Endothelial cell of umbilical vein (primary cell): ENCODE measurements at regions of chr9 and their contacts with region 1.

Region 1: GRCh38 chr9:92438900-92439526 is 14.7 kb upstream of the OMD start:
- DNase-seq: peak; percentile 38
- H3K4me3 ChIP-seq: no peak overlapping the region
- H3K27ac ChIP-seq: no peak overlapping the region
- H3K4me1 ChIP-seq: no peaks in the 10 kb centered on the region
- H3K27me3 ChIP-seq: no peaks in the 10 kb centered on the region
- CTCF ChIP-seq: no peak
- POLR2A ChIP-seq: no peak

Region 2: DNA sequence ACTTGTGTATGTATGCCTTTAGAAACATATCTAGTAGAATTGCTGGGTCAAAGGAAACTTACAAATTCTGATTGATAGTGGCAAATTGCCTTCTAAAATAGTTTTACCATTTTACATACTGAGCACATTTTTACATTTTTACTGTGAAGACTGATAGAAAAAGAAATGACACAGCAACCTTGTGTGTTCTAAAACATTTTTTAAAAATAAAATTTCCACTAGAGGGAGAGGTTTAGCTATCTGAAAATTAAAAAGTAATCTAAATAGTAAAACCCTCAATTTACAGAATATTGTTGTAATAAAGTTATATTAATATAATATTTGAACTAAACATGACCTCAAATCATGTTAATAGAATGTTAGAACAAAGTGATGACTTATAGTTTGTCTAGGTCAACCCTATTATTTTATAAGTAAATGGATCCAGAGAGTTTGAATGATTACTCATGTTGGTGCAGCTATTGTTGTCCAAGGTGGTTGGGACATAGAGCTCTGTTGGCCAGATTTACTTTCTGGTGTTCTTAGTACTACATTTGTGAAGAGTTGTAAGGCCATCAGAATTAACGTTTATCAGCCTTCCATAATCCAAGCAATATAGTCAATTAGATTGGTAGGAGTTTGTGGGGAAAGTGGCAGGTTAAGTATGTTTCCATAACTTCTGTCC is 96.1 kb before region 1 on chr9:
- CTCF ChIA-PET with region 1: interaction called, 11 read pairs
- POLR2A ChIA-PET with region 1: no interaction called
- dilution Hi-C with region 1: no loop called
- intact Hi-C with region 1: no loop called
- DNase-seq: peak; percentile 6
- H3K4me3 ChIP-seq: no peak overlapping the region
- H3K27ac ChIP-seq: no peak overlapping the region
- H3K4me1 ChIP-seq: no peaks in the 10 kb centered on the region
- H3K27me3 ChIP-seq: no peaks in the 10 kb centered on the region
- CTCF ChIP-seq: no peak
- POLR2A ChIP-seq: no peak

Region 3: DNA sequence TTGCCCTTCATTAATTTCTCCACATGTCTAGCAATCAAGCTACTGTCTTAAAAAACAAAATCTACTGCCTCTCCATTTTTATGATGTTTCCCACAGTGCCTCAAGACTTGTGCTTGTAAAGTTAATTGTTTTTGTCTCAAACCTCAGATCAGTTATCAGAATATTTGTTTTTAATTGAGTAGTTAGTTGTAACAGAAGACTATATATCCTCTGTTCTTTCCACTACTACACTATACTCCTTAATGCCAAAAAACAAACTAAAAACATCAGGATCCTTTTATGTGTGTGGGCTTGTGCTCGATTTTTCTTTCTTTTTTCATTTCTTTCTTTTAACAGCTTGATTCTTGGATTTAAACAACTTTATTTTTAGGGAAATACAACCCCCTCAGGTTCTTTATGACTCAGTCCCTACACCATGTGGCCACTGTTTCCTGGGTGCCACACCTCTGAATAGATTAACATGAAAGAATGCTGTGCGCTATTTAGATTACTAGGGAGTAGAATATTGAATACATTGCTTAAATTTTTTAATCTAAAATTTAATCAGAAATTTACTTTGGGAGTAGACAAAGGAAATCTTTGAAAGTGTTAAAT is 42.1 kb after region 1 on chr9:
- CTCF ChIA-PET with region 1: no interaction called
- POLR2A ChIA-PET with region 1: no interaction called
- dilution Hi-C with region 1: no loop called
- intact Hi-C with region 1: loop called (anchors 10 kb)
- DNase-seq: no peak
- H3K4me3 ChIP-seq: no peak overlapping the region
- H3K27ac ChIP-seq: no peak overlapping the region
- H3K4me1 ChIP-seq: peaks cover 26% of the 10 kb centered on the region
- H3K27me3 ChIP-seq: no peaks in the 10 kb centered on the region
- CTCF ChIP-seq: no peak
- POLR2A ChIP-seq: no peak